Activated T-helper 1 cell treated with anti-CD3 and anti-CD28 coated beads, Interleukin-12 subunit alpha, Interleukin-12 subunit beta, Interleukin-2, Interleukin-4 antibody, amounts not matched to agents 30 ng/mL and 10 ng/mL and 1 ng/mL, durations not matched to agents 14 hours and 24 hours and 36 hours (primary cell): ENCODE measurements at regions of chr7 and their contacts with region 1.

Region 1: DNA sequence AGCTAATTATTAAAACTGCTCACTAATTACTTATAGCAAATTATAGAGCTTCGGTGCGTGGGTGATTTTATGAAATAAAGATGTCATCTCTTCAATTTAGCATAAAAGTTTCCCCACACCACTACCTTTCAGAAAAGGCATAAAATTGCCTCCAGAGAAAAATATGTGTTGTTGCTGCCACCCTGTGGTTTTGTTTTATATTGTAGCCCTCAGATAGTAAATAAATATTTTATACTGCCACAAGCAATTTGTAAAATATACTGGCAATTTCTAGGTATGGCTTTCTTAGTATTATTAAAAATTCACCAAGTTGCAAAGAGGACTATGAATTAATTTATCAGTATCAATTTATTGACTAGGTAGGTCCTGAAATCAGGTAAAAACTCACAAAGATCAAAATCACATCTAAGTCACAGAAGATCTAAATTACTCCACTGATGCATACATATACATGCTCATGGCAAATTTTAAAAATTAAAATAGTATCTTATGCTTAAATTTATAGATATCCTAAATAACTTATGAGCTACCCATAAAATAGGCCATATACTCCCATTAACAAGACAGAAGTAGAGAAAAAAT is 26.5 kb downstream of the ASNS start:
- DNase-seq: no peak
- H3K4me3 Mint-ChIP-seq: no peak overlapping the region
- H3K27ac Mint-ChIP-seq: no peak overlapping the region
- H3K4me1 Mint-ChIP-seq: no peaks in the 10 kb centered on the region
- H3K27me3 Mint-ChIP-seq: no peaks in the 10 kb centered on the region

Region 2: DNA sequence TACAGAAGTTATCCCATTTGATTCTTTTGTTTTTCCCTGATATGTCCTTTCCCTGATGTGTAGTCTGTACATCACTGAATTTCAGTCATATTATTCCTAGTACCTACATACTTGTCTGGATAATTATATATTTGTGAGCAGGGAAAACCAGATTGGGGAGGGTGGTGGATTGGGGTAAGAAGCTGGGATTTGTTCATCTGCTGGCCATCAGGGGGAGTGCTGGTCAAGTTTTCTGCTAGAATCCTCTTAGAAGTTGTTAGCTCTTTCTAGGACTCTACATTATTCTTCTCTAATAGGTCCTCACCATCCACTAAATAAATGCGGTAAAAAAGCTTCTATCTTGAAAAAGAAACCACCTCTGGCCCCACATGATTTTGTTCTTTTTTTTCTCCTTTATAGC is 346.5 kb before region 1 on chr7:
- intact Hi-C with region 1: loop called (anchors 5 kb)
- DNase-seq: no peak
- H3K4me3 Mint-ChIP-seq: no peak overlapping the region
- H3K27ac Mint-ChIP-seq: no peak overlapping the region
- H3K4me1 Mint-ChIP-seq: no peaks in the 10 kb centered on the region
- H3K27me3 Mint-ChIP-seq: no peaks in the 10 kb centered on the region

Region 3: DNA sequence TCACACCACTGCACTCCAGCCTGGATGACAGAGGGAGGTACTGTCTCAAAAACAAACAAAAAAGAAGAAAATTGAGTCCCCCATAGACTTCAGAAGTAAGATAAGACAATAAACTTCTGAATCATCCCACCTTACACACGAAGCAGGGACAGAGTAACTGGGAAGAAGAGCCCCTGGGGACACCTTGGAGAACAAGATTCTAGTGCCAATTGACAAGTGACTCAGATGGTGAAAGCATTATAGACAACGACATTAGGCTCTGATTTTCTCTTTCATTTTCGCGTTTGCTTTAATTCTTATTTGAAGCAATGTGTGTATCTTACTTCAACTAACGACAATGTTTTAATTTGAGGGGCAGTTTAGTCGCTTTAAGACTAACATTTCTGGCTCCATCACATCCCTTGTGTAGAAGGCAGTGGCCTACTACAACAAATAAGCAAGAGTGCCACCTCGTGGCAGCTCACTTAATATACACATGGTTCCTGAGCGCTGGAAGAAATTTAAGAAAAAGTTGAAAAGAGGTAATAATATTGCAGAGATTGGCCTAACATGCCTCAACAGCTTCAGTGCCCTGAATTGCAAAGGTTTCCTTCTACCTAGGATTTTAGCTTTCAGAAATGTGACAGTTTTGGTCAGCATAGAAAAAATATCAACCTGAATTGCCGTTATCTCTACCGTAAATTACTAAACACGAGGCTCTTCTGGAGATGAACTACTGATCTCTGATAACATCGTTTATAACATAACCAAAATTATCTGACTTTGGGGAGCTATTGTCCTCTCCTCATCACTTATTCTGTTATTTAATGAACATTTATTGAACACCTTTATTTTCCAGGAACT is 10.2 kb before region 1 on chr7:
- intact Hi-C with region 1: no loop called
- DNase-seq: peak; percentile 31
- H3K4me3 Mint-ChIP-seq: no peak overlapping the region
- H3K27ac Mint-ChIP-seq: no peak overlapping the region
- H3K4me1 Mint-ChIP-seq: no peaks in the 10 kb centered on the region
- H3K27me3 Mint-ChIP-seq: peaks cover 27% of the 10 kb centered on the region

Region 4: GRCh38 chr7:98021588-98022351 is 176.1 kb after region 1 on chr7:
- intact Hi-C with region 1: no loop called
- DNase-seq: peak; percentile 65
- H3K4me3 Mint-ChIP-seq: no peak overlapping the region
- H3K27ac Mint-ChIP-seq: no peak overlapping the region
- H3K4me1 Mint-ChIP-seq: peaks cover 6% of the 10 kb centered on the region
- H3K27me3 Mint-ChIP-seq: no peaks in the 10 kb centered on the region